GM12878 (cell line): ENCODE measurements at regions of chr1 and their contacts with region 1.

Region 1: GRCh38 chr1:9196129-9197040 is 38.2 kb upstream of the H6PD start:
- DNase-seq: peak; percentile 67
- ATAC-seq: peak; percentile 74
- H3K4me3 ChIP-seq: peak overlapping the region; percentile 5; the same call in 1 of the 2 replicates
- H3K27ac ChIP-seq: peak overlapping the region; percentile 51
- H3K4me1 ChIP-seq: peaks cover 52% of the 10 kb centered on the region
- H3K27me3 ChIP-seq: peaks cover 0 to 21% of the 10 kb centered on the region in 2 experiments; a peak in 3 of 4 replicates
- CTCF ChIP-seq: peak; percentile 81 to 97 (median 86); a peak in 5 of 6 replicates
- EP300 ChIP-seq: peak in 1 of 2 experiments; percentile 61; a peak in 1 of 4 replicates
- POLR2A ChIP-seq: no peak
- RAD21 ChIP-seq: peak; percentile 96

Region 2: DNA sequence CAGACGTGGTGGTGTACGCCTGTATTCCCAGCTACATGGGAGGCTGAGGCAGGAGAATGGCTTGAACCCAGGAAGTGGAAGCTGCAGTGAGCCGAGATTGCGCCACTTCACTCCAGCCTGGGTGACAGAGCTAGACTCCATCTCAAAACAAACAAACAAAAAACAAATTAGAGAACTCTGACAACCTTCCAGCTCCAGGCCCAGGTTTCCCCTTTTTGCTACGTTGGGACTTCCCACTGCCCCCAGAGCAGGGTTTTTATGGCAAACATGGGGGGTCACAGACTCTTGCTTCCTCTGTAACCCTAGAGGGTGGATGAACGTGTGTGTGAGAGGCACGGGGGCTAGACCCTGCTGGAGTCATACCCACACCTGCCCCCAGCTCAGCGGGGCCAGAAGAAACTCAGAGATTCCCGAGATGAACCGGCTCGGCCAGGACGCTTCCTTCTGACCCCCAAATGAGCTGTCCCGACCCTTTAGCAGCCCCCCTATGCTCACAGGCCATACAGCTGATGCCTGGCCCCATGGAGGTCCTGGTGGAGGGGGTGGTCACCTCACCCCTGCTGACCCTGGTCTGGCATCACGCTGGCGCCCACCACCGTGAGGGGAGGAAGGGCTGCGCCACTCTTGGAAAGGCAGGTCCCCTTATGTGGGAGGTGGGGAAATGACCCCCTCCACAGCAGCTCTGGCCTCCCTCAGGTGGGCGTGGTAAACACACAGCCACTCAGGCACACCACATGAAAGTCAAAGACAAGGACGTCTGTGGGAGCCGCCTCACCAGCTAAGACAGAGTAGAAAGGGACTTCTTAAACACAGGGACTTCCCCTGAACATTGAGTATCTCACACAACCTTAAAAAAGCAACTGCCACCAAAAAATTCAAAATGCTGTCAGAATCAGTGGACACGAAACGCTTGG is 74.6 kb before region 1 on chr1:
- CTCF ChIA-PET with region 1: interaction called, 11 read pairs
- POLR2A ChIA-PET with region 1: no interaction called
- RAD21 ChIA-PET with region 1: interaction called, 10 read pairs
- SMC1A ChIA-PET with region 1: interaction called, 8 read pairs
- in situ Hi-C with region 1: no loop called
- intact Hi-C with region 1: no loop called
- DNase-seq: peak; percentile 71
- ATAC-seq: peak; percentile 89
- H3K4me3 ChIP-seq: peak overlapping the region; percentile 53; the same call in 1 of the 2 replicates
- H3K27ac ChIP-seq: peak overlapping the region; percentile 74
- H3K4me1 ChIP-seq: peaks cover 40% of the 10 kb centered on the region
- H3K27me3 ChIP-seq: no peaks in the 10 kb centered on the region
- CTCF ChIP-seq: no peak
- EP300 ChIP-seq: peak; percentile 33 to 41; a peak in 1 of 4 replicates
- POLR2A ChIP-seq: no peak
- RAD21 ChIP-seq: no peak

Region 3: GRCh38 chr1:9128520-9129265 is 67.7 kb before region 1 on chr1 and contains the start of gene GPR157:
- CTCF ChIA-PET with region 1: interaction called, 18 read pairs
- POLR2A ChIA-PET with region 1: interaction called, 3 read pairs
- RAD21 ChIA-PET with region 1: interaction called, 5 read pairs
- SMC1A ChIA-PET with region 1: interaction called, 6 read pairs
- in situ Hi-C with region 1: no loop called
- intact Hi-C with region 1: no loop called
- DNase-seq: no peak
- ATAC-seq: peak; percentile 81
- H3K4me3 ChIP-seq: peak within 1 kb of the TSS; percentile 85
- H3K27ac ChIP-seq: peak within 1 kb of the TSS; percentile 23
- H3K4me1 ChIP-seq: peaks cover 28% of the 10 kb centered on the region
- H3K27me3 ChIP-seq: no peaks in the 10 kb centered on the region
- CTCF ChIP-seq: peak in 2 of 3 experiments; percentile 8 to 26; a peak in 1 of 6 replicates
- EP300 ChIP-seq: no peak
- POLR2A ChIP-seq: peak; percentile 31; the same call in 1 of the 2 replicates
- RAD21 ChIP-seq: no peak
- polyA plus RNA-seq, gene GPR157: 0.66 to 1.1 TPM

Region 4: GRCh38 chr1:9135073-9135836 is 61.1 kb before region 1 on chr1:
- CTCF ChIA-PET with region 1: interaction called, 18 read pairs
- POLR2A ChIA-PET with region 1: no interaction called
- RAD21 ChIA-PET with region 1: interaction called, 5 read pairs
- SMC1A ChIA-PET with region 1: interaction called, 3 read pairs
- in situ Hi-C with region 1: no loop called
- intact Hi-C with region 1: no loop called
- DNase-seq: peak; percentile 67
- ATAC-seq: peak; percentile 88
- H3K4me3 ChIP-seq: 0 out of 2 replicates have a peak overlapping the region, but pooled peaks have one; percentile 5
- H3K27ac ChIP-seq: 0 out of 2 replicates have a peak overlapping the region, but pooled peaks have one; percentile 17
- H3K4me1 ChIP-seq: peaks cover 28% of the 10 kb centered on the region
- H3K27me3 ChIP-seq: no peaks in the 10 kb centered on the region
- CTCF ChIP-seq: no peak
- EP300 ChIP-seq: no peak; a peak in 1 of 4 replicates
- POLR2A ChIP-seq: no peak
- RAD21 ChIP-seq: no peak

Region 5: GRCh38 chr1:9145021-9145668 is 51.2 kb before region 1 on chr1:
- CTCF ChIA-PET with region 1: interaction called, 49 read pairs
- POLR2A ChIA-PET with region 1: no interaction called
- RAD21 ChIA-PET with region 1: interaction called, 14 read pairs
- SMC1A ChIA-PET with region 1: interaction called, 39 read pairs
- in situ Hi-C with region 1: no loop called
- intact Hi-C with region 1: loop called (anchors 1 kb)
- DNase-seq: no peak
- ATAC-seq: peak; percentile 62
- H3K4me3 ChIP-seq: no peak overlapping the region
- H3K27ac ChIP-seq: no peak overlapping the region; the same call in 1 of the 2 replicates
- H3K4me1 ChIP-seq: peaks cover 17% of the 10 kb centered on the region
- H3K27me3 ChIP-seq: no peaks in the 10 kb centered on the region
- CTCF ChIP-seq: no peak
- EP300 ChIP-seq: no peak
- POLR2A ChIP-seq: no peak
- RAD21 ChIP-seq: no peak

Region 6: DNA sequence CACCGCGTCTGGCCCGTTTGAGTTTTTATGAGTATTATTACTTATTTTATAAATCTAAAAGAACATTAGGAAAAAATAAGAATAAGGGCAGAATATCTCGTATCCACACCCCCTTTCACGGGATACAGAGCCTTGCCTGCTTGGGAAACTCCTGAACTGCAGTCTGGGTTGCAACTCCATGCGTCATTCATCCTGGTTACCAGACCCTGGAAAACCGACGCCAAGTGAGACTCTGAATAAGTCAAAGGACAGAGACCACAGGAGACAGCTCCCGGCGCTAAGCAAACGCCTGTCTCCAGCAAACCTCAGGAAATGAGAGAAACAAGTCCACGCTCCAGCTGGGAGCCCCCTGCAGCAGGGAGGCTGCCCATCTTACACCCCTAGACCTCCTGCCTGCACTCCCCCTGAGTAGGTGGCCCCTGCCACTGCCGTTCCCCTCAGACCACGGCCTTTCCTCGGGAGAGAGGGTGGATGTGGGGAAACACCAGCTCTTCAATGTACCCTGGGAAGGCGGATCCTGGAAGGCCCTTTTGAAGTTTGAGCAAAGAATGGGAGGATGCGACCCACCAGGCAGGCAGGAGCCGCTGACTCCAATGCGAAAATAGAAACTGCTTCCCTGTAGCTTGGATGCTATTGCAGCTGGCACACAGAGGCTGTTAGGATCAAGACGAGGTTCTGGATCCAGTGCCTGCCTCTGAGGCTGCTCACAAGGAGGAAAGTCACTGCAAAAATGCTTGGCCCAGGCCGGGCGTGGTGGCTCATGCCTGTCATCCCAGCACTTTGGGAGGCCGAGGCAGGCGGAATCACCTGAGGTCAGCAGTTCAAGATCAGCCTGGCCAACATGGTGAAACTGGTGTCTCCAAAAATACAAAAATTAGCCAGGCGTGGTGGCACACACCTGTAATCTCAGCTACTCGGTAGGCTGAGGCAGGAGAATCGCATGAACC is 29.8 kb before region 1 on chr1:
- CTCF ChIA-PET with region 1: interaction called, 7 read pairs
- POLR2A ChIA-PET with region 1: interaction called, 4 read pairs
- RAD21 ChIA-PET with region 1: interaction called, 5 read pairs
- SMC1A ChIA-PET with region 1: interaction called, 15 read pairs
- in situ Hi-C with region 1: no loop called
- intact Hi-C with region 1: no loop called
- DNase-seq: no peak
- ATAC-seq: no peak
- H3K4me3 ChIP-seq: no peak overlapping the region
- H3K27ac ChIP-seq: no peak overlapping the region
- H3K4me1 ChIP-seq: peaks cover 39% of the 10 kb centered on the region
- H3K27me3 ChIP-seq: no peaks in the 10 kb centered on the region
- CTCF ChIP-seq: no peak
- EP300 ChIP-seq: no peak
- POLR2A ChIP-seq: no peak
- RAD21 ChIP-seq: no peak

Region 7: DNA sequence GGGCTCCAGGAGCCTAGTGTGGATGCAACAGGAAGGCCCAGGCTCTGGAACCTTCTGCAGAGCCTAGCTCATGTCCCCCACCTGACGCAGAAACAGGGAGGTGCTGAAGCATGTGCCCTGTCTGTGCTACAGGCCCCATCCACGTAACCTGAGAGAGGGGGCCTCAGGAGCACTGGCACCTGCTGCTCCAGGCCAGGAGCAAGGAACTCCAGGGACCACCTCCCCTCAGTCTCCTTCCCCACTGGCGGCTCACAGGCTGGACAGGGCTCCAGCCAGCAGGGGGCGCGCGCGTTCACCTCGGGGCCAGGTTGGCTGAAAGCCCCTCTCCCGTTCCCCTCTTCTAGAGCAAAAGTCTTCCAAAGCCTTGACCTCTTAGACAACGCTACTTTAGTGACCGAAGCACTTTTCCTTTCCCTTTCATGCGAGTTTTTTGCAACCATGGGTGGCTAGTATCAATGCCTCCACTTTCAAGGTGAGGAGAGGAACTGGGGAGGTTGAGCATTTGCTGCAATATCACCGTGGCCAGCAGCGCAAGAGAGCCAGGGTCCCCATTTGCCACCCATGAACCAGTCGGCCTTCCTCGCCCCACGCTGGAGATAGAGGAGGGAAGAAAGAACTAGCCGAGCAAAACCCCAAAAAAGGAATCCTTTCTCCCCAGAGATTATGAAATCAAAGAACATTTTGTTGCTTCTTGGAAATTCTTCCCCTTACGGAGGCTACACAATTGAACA is 15.0 kb before region 1 on chr1:
- CTCF ChIA-PET with region 1: interaction called, 44 read pairs
- POLR2A ChIA-PET with region 1: interaction called, 3 read pairs
- RAD21 ChIA-PET with region 1: interaction called, 14 read pairs
- SMC1A ChIA-PET with region 1: interaction called, 14 read pairs
- in situ Hi-C with region 1: no loop called
- intact Hi-C with region 1: loop called (anchors 1 kb)
- DNase-seq: peak; percentile 43
- ATAC-seq: peak; percentile 75
- H3K4me3 ChIP-seq: peak overlapping the region; percentile 90
- H3K27ac ChIP-seq: peak overlapping the region; percentile 84
- H3K4me1 ChIP-seq: peaks cover 17% of the 10 kb centered on the region
- H3K27me3 ChIP-seq: no peaks in the 10 kb centered on the region
- CTCF ChIP-seq: peak; percentile 93 to 98 (median 97); a peak in 5 of 6 replicates
- EP300 ChIP-seq: no peak
- POLR2A ChIP-seq: peak; percentile 56; the same call in 1 of the 2 replicates
- RAD21 ChIP-seq: peak; percentile 23; the same call in 1 of the 2 replicates